ENCODE measurements at regions of chr1 and their contacts with region 1.

Region 1: GRCh38 chr1:39098546-39099250 is 72.5 kb downstream of the NDUFS5 start:
- DNase-seq: peak; percentile 25 to 59
- ATAC-seq: peak; percentile 58 to 79 (median 68)
- H3K4me3 ChIP-seq: no peak overlapping the region
- H3K27ac ChIP-seq: no peak overlapping the region
- H3K4me1 ChIP-seq: peaks cover 0 to 32% (median 19%) of the 10 kb centered on the region in 9 donors
- H3K27me3 ChIP-seq: no peaks in the 10 kb centered on the region
- CTCF ChIP-seq: peak; percentile 65 to 85 (median 73)

Region 2: GRCh38 chr1:38873027-38873969 is 225.4 kb before region 1 on chr1 and contains the start of gene MYCBP:
- intact Hi-C with region 1: loop called in 1 of 10 experiments (anchors 10 kb)
- DNase-seq: peak; percentile 95 to 97
- ATAC-seq: peak; percentile 99 to 100 (median 100)
- H3K4me3 ChIP-seq: peak within 1 kb of the TSS; percentile 50 to 96 (median 82)
- H3K27ac ChIP-seq: peak within 1 kb of the TSS in 9 of 10 donors; percentile 56 to 86 (median 73)
- H3K4me1 ChIP-seq: peaks cover 5 to 35% (median 24%) of the 10 kb centered on the region in 9 donors
- H3K27me3 ChIP-seq: no peaks in the 10 kb centered on the region
- CTCF ChIP-seq: peak in 6 of 9 donors; percentile 14 to 44 (median 28)
- total RNA-seq, gene MYCBP: 5.4 to 22.8 (median 8.2) TPM

Region 3: GRCh38 chr1:39132505-39133339 is 34.0 kb after region 1 on chr1:
- intact Hi-C with region 1: loop called in 1 of 10 experiments (anchors 5 kb)
- DNase-seq: peak; percentile 74 to 88
- ATAC-seq: peak; percentile 76 to 95 (median 91)
- H3K4me3 ChIP-seq: peak overlapping the region in 2 of 10 donors; percentile 6 to 9
- H3K27ac ChIP-seq: peak overlapping the region in 9 of 10 donors; percentile 69 to 84 (median 75)
- H3K4me1 ChIP-seq: peaks cover 5 to 76% (median 61%) of the 10 kb centered on the region in 9 donors
- H3K27me3 ChIP-seq: no peaks in the 10 kb centered on the region
- CTCF ChIP-seq: peak in 8 of 9 donors; percentile 26 to 69 (median 48)

Region 4: DNA sequence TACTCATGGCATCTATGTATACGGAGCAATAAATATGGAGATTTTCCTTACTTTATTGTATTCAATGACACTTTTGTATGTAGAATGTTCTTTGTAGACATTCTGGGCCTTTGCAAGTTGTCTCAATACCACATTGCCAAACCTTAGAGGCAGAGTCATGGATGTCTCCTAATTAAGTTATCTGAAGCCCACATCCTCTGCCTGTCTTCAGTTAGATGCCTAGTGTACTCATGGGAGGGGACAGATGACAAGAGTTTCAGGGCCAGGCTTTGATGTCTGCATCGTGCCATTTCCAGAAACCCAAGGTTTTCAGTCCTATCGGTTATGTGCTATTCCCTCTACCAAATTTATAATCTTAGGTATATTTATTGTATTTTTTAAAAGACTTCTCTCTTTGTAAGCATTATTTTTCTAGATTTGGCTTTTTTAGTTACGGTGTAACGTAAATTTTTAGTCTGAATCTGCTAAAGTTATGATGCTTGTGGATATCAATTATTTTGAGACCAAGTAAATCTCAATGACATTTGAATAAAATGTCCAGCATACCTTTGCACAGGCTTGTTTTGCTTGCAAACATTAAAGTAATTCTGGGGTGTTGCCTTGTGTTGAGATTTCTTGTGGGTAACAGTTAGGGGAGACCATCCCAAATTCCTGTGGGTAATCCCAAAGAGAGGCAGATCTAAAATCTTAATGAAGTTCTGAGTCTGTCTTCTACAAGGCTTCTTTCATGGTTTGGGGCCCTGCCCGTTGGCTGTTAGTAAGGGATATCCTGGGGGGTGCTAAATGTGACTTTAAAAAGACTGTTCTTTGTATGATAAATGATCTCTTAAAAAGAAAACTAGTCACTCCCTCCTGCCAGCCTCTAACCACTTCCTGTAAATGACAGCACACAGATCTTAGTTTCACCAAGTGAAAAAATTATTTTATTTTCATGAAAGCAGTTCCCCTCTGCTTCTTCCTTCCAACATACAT is 97.8 kb after region 1 on chr1:
- intact Hi-C with region 1: loop called in 8 of 10 experiments (anchors 1 to 5 kb)
- DNase-seq: peak in 1 of 2 donors; percentile 21
- ATAC-seq: no peak
- H3K4me3 ChIP-seq: no peak overlapping the region
- H3K27ac ChIP-seq: peak overlapping the region in 5 of 10 donors; percentile 30 to 83 (median 44)
- H3K4me1 ChIP-seq: peaks cover 3 to 66% (median 46%) of the 10 kb centered on the region in 9 donors
- H3K27me3 ChIP-seq: no peaks in the 10 kb centered on the region
- CTCF ChIP-seq: no peak

Region 5: DNA sequence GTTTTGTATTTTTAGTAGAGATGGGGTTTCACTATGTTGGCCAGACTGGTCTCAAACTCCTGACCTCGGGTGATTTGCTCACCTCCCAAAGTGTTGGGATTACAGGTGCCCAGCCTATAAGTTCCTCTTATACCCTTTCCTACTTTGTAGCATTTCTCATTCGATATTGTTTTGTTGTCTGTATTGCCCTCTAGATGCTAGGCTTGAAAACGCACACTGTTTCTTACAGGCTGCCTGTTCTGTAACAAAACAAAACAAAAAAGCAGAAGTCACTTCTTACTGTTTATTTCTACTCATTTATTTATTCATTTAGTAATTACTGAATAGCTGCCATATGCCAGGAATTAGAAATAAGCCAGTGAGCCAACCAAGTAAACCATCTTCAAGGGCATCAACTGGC is 255.9 kb after region 1 on chr1:
- intact Hi-C with region 1: no loop called
- DNase-seq: no peak
- ATAC-seq: no peak
- H3K4me3 ChIP-seq: no peak overlapping the region
- H3K27ac ChIP-seq: no peak overlapping the region
- H3K4me1 ChIP-seq: peaks cover 0 to 14% (median 8%) of the 10 kb centered on the region in 9 donors
- H3K27me3 ChIP-seq: no peaks in the 10 kb centered on the region
- CTCF ChIP-seq: peak in 1 of 9 donors; percentile 8

Region 6: GRCh38 chr1:39538588-39539465 is 440.1 kb after region 1 on chr1:
- intact Hi-C with region 1: loop called in 7 of 10 experiments (anchors 2 to 10 kb)
- DNase-seq: peak; percentile 42 to 70
- ATAC-seq: peak; percentile 79 to 92 (median 87)
- H3K4me3 ChIP-seq: no peak overlapping the region
- H3K27ac ChIP-seq: no peak overlapping the region
- H3K4me1 ChIP-seq: peaks cover 0 to 30% (median 18%) of the 10 kb centered on the region in 9 donors
- H3K27me3 ChIP-seq: no peaks in the 10 kb centered on the region
- CTCF ChIP-seq: peak; percentile 88 to 94 (median 92)